ENCODE measurements at regions of chr3 and their contacts with region 1.

Region 1: DNA sequence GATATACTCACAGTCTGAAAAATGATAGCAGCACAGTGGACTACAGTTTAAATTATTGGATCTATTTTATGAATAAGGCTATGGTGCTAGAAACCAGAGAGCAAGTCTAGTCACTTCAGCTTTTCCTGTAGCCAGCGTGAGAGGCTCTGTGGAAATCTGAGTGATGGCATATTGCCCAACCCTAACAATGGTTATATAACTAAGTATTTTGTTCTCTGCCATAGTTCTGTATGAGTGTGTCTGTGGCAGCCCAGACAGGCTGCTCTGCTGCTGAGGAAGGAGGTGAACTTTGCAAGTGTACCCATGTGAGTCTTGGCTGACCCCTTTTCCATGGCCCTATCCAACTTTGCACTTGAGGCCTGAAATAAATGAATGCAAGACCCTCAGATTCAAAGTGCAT is 105.7 kb downstream of the LRTM1 start:
- DNase-seq: peak; percentile 59
- ATAC-seq: peak; percentile 32
- H3K4me3 ChIP-seq: no peak overlapping the region
- H3K27ac ChIP-seq: no peak overlapping the region
- H3K4me1 ChIP-seq: peaks cover 15% of the 10 kb centered on the region
- H3K27me3 ChIP-seq: no peaks in the 10 kb centered on the region
- CTCF ChIP-seq: no peak
- POLR2A ChIP-seq: no peak
- RAD21 ChIP-seq: no peak

Region 2: DNA sequence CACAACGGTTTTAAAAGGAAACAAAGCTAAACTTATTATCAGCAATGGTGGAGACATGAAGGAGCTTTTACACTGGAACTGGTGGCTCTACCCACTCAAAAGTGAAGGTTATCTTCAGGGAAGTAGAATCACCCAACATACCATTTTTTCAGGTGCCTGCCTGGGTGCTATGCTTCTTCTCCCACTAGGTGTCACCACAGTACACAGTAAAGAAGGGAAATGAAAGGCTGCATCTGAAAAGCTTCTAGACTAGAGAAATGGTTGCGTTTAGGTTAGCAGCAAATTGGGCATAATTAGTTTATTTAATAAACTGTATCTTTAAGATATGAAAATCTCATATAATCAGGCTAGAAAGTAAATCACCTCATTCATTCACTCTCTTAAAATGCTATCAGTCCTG is 883.6 kb before region 1 on chr3:
- CTCF ChIA-PET with region 1: no interaction called
- POLR2A ChIA-PET with region 1: interaction called, 3 read pairs
- dilution Hi-C with region 1: no loop called
- in situ Hi-C with region 1: no loop called
- intact Hi-C with region 1: loop called (anchors 10 kb)
- DNase-seq: peak; percentile 52
- ATAC-seq: peak; percentile 96
- H3K4me3 ChIP-seq: no peak overlapping the region
- H3K27ac ChIP-seq: no peak overlapping the region
- H3K4me1 ChIP-seq: no peaks in the 10 kb centered on the region
- H3K27me3 ChIP-seq: no peaks in the 10 kb centered on the region
- CTCF ChIP-seq: peak; percentile 69
- POLR2A ChIP-seq: no peak
- RAD21 ChIP-seq: peak; percentile 71

Region 3: DNA sequence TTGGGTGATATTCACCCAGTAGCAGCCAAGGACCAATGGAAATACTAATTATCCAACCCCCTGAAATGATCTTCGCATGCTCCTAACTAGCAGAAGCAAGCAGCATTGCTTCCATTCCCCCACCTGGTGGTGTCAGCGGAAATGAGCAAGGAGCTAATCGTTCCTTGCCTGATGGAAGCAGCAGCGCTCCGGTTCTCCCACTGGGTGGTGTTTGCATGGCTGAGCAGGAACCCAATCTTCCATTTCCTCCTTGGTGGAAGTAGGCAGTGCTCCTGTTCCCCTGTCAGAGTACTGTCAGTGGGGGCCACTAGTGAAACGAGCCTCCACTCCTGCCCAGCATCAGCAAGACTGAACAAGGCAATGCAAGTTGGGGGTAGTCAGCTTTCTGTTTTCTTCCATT is 388.4 kb before region 1 on chr3:
- CTCF ChIA-PET with region 1: no interaction called
- POLR2A ChIA-PET with region 1: no interaction called
- dilution Hi-C with region 1: no loop called
- in situ Hi-C with region 1: loop called (anchors 25 kb)
- intact Hi-C with region 1: loop called (anchors 5 kb)
- DNase-seq: no peak
- ATAC-seq: no peak
- H3K4me3 ChIP-seq: no peak overlapping the region
- H3K27ac ChIP-seq: no peak overlapping the region
- H3K4me1 ChIP-seq: no peaks in the 10 kb centered on the region
- H3K27me3 ChIP-seq: no peaks in the 10 kb centered on the region
- CTCF ChIP-seq: no peak
- POLR2A ChIP-seq: no peak
- RAD21 ChIP-seq: no peak

Region 4: GRCh38 chr3:54756330-54756731 is 65.9 kb before region 1 on chr3:
- CTCF ChIA-PET with region 1: no interaction called
- POLR2A ChIA-PET with region 1: no interaction called
- dilution Hi-C with region 1: no loop called
- in situ Hi-C with region 1: no loop called
- intact Hi-C with region 1: loop called (anchors 5 kb)
- DNase-seq: peak; percentile 94
- ATAC-seq: peak; percentile 92
- H3K4me3 ChIP-seq: no peak overlapping the region
- H3K27ac ChIP-seq: peak overlapping the region; percentile 82
- H3K4me1 ChIP-seq: peaks cover 20% of the 10 kb centered on the region
- H3K27me3 ChIP-seq: no peaks in the 10 kb centered on the region
- CTCF ChIP-seq: no peak
- POLR2A ChIP-seq: no peak
- RAD21 ChIP-seq: no peak

Region 5: DNA sequence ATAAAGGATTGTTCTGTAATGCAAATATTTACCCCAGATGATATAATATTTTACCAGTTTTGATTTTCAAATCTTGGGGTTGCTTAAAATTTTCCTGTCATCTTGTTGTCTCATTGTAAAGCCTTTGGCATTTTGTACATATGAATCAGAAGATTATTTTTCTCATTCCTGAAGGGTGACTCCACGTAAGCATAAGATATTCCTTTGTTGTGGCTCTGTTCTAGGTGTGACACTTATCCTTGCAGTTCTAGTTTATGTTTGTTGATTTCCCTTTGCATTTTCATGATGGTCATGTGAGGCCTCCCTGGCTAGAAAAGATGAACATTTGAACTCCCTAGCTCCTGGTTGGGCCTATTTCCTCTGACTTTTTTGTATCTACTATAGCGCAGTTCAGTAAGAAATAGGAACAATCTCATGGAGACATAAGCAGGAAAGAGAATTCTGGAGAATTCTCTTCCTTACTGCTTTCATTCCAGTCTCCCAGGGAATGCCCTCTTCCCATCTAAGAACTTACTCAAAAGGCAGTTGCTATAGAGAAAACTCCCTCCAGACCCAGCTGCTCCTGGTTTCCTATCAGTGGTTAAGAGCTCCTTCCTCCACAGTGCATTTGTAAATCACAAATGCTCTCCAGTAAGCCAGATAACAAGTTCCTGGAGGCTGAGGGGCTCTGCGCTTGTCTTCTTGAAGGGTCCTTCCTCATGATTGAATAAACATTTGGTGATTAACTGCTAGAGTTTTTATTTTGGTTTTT is 540.2 kb after region 1 on chr3:
- CTCF ChIA-PET with region 1: no interaction called
- POLR2A ChIA-PET with region 1: no interaction called
- dilution Hi-C with region 1: no loop called
- in situ Hi-C with region 1: no loop called
- intact Hi-C with region 1: no loop called
- DNase-seq: peak; percentile 47
- ATAC-seq: peak; percentile 32
- H3K4me3 ChIP-seq: no peak overlapping the region
- H3K27ac ChIP-seq: no peak overlapping the region
- H3K4me1 ChIP-seq: peaks cover 7% of the 10 kb centered on the region
- H3K27me3 ChIP-seq: no peaks in the 10 kb centered on the region
- CTCF ChIP-seq: no peak
- POLR2A ChIP-seq: no peak
- RAD21 ChIP-seq: no peak

Measured in IMR-90 (cell line).